ENCODE measurements at regions of chr3 and their contacts with region 1.

Region 1: GRCh38 chr3:111781561-111782446 is 77.3 kb upstream of the PHLDB2 start:
- DNase-seq: no peak
- ATAC-seq: no peak
- H3K4me3 ChIP-seq: no peak overlapping the region
- H3K27ac ChIP-seq: no peak overlapping the region
- H3K4me1 ChIP-seq: no peaks in the 10 kb centered on the region
- H3K27me3 ChIP-seq: no peaks in the 10 kb centered on the region
- CTCF ChIP-seq: no peak
- EP300 ChIP-seq: no peak
- POLR2A ChIP-seq: no peak
- RAD21 ChIP-seq: no peak

Region 2: DNA sequence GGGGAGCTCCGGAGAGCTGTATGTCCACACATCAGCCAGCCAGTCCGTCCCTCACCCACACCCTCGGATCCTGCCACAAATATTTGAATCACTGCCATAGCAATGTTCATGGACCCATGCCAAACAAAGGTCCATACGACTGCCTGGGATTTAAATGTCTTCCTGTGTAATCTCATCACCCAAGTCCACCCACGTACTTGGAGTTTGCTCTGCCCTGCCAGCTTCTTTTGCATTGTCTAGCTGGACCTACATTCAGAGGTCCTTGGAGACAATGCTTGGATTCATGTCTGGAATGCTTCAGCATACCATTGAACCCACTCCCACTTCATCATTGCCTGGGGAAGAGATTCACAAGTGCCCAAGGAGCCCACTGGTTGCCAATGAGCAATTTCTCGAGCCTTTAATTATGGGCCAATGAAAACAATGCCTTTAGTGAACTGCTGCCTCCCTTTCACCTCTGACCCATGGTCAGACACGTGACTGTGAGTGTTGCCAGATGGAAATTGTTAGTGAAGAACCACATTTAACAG is 13.2 kb before region 1 on chr3:
- CTCF ChIA-PET with region 1: interaction called, 6 read pairs
- POLR2A ChIA-PET with region 1: interaction called, 5 read pairs
- RAD21 ChIA-PET with region 1: interaction called, 3 read pairs
- SMC1A ChIA-PET with region 1: interaction called, 18 read pairs
- in situ Hi-C with region 1: no loop called
- intact Hi-C with region 1: no loop called
- DNase-seq: no peak
- ATAC-seq: no peak
- H3K4me3 ChIP-seq: no peak overlapping the region
- H3K27ac ChIP-seq: no peak overlapping the region
- H3K4me1 ChIP-seq: no peaks in the 10 kb centered on the region
- H3K27me3 ChIP-seq: no peaks in the 10 kb centered on the region; a peak in 1 of 4 replicates
- CTCF ChIP-seq: no peak
- EP300 ChIP-seq: no peak
- POLR2A ChIP-seq: no peak
- RAD21 ChIP-seq: no peak

Region 3: DNA sequence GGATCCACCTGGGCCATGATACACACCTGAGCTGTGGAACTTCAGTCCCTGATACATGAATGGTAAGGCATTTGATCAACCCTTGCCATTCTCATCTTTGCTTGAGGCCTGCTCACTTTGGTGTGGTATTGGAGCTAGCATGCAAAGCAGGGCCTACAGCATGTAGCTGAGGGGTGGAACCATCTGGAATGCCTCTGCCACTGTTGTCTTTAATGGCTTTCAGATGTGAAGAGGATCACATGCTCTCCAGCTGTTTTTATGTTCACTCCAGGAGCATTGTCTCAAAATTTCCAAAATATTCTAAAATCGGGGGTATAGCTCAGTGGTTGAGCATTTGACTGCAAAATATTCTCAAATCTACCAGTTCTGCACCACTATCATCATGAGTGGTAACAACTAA is 12.9 kb after region 1 on chr3:
- CTCF ChIA-PET with region 1: interaction called, 3 read pairs
- POLR2A ChIA-PET with region 1: no interaction called
- RAD21 ChIA-PET with region 1: no interaction called
- SMC1A ChIA-PET with region 1: interaction called, 10 read pairs
- in situ Hi-C with region 1: no loop called
- intact Hi-C with region 1: no loop called
- DNase-seq: no peak
- ATAC-seq: no peak
- H3K4me3 ChIP-seq: no peak overlapping the region
- H3K27ac ChIP-seq: no peak overlapping the region
- H3K4me1 ChIP-seq: no peaks in the 10 kb centered on the region
- H3K27me3 ChIP-seq: no peaks in the 10 kb centered on the region
- CTCF ChIP-seq: no peak
- EP300 ChIP-seq: no peak
- POLR2A ChIP-seq: no peak
- RAD21 ChIP-seq: no peak

Measured in GM12878 (cell line).